PC-9 (cell line): ENCODE measurements at regions of chr9 and their contacts with region 1.

Region 1: GRCh38 chr9:81689343-81690190 is at the start of gene TLE1:
- DNase-seq: peak; percentile 98 to 100
- H3K4me3 ChIP-seq: peak within 1 kb of the TSS; percentile 84
- H3K27ac ChIP-seq: peak within 1 kb of the TSS; percentile 91
- H3K4me1 ChIP-seq: peaks cover 34% of the 10 kb centered on the region
- H3K27me3 ChIP-seq: no peaks in the 10 kb centered on the region
- CTCF ChIP-seq: no peak
- total RNA-seq, gene TLE1: 69.9 and 80.9 TPM in 2 replicates

Region 2: GRCh38 chr9:80664327-80665200 is 1025.0 kb before region 1 on chr9:
- CTCF ChIA-PET with region 1: no interaction called
- POLR2A ChIA-PET with region 1: no interaction called
- intact Hi-C with region 1: loop called (anchors 5 kb)
- DNase-seq: no peak
- H3K4me3 ChIP-seq: no peak overlapping the region
- H3K27ac ChIP-seq: no peak overlapping the region
- H3K4me1 ChIP-seq: no peaks in the 10 kb centered on the region
- H3K27me3 ChIP-seq: no peaks in the 10 kb centered on the region
- CTCF ChIP-seq: peak; percentile 45; the same call in 1 of the 2 replicates

Region 3: DNA sequence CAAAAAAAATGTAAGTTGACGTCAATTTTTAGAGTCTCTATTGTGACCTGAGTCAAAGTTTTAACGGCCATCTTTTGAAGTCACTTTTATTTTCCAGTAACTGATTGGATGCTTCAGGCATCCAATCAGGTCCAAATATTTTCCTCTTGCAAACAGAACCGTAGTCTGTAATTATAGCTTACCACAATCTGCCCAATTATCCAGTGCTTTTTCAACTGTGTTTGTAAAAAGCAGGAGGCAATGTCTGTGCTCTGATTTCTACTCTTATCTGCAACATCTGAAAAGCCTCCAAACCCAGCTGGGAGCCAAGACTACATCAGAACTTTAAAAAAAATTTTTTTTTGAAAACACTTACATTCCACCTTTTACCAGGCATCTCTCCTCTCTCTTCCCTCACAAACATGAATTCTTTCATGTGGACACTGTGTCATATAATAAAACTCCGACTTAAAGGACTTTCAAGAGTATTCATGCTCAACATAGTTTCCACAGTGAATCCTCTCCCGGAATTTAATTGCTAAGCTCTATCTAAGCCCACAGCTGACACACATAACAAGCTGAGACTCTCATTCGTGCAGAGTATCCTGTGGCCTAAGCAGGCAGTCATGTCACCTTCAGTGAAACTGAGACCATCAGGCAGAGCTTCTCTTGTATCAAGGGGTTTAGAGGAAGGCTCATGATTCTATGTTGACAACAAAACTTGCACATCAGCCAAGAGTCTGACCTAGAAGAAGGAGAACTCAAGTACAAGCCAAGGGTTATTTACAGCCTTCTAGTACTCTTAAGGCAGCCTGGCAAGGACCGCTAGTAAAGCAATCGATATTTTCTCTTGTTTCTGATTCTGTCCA is 272.9 kb before region 1 on chr9:
- CTCF ChIA-PET with region 1: no interaction called
- POLR2A ChIA-PET with region 1: no interaction called
- intact Hi-C with region 1: no loop called
- DNase-seq: no peak
- H3K4me3 ChIP-seq: no peak overlapping the region
- H3K27ac ChIP-seq: no peak overlapping the region
- H3K4me1 ChIP-seq: no peaks in the 10 kb centered on the region
- H3K27me3 ChIP-seq: no peaks in the 10 kb centered on the region
- CTCF ChIP-seq: no peak

Region 4: GRCh38 chr9:81431641-81432040 is 257.9 kb before region 1 on chr9:
- CTCF ChIA-PET with region 1: no interaction called
- POLR2A ChIA-PET with region 1: no interaction called
- intact Hi-C with region 1: no loop called
- DNase-seq: no peak
- H3K4me3 ChIP-seq: no peak overlapping the region
- H3K27ac ChIP-seq: no peak overlapping the region
- H3K4me1 ChIP-seq: no peaks in the 10 kb centered on the region
- H3K27me3 ChIP-seq: no peaks in the 10 kb centered on the region
- CTCF ChIP-seq: no peak

Region 5: GRCh38 chr9:81594415-81594814 is 95.2 kb before region 1 on chr9:
- CTCF ChIA-PET with region 1: no interaction called
- POLR2A ChIA-PET with region 1: interaction called, 17 read pairs
- intact Hi-C with region 1: no loop called
- DNase-seq: no peak
- H3K4me3 ChIP-seq: no peak overlapping the region
- H3K27ac ChIP-seq: no peak overlapping the region
- H3K4me1 ChIP-seq: no peaks in the 10 kb centered on the region
- H3K27me3 ChIP-seq: no peaks in the 10 kb centered on the region
- CTCF ChIP-seq: no peak

Region 6: DNA sequence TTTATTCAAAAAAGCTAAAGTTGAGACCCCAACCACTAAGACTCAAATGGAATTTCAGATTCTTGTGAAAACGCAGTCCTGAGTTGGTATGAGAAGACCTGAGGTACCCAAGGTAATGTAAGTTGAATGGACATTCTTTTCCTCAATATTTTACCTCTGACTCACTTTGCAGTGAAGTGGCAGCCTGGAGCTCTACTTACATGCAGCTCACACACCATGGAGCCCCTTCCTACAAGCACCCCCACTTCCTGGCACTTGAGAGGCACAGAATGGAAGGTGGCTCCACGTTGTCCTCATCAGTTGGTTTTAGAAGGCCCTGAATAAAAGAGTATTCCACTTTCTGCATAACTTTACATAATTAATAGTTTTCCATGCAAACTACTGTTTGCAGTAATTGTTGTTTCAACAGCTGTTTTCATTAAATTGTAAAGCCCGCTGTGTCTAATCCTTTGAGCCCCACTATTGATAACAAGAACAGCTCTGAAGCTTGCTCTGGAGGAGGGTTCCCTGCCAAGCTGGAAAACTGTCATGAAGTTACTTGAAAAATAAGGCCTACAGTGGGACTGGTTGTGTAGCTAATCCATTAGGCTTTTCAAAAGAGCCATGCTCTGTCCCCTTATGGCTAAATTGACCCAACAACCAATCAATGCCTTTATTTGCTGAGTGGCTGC is 136.4 kb after region 1 on chr9:
- CTCF ChIA-PET with region 1: no interaction called
- POLR2A ChIA-PET with region 1: interaction called, 4 read pairs
- intact Hi-C with region 1: loop called (anchors 1 kb)
- DNase-seq: peak; percentile 51 to 88
- H3K4me3 ChIP-seq: no peak overlapping the region
- H3K27ac ChIP-seq: peak overlapping the region; percentile 91
- H3K4me1 ChIP-seq: peaks cover 39% of the 10 kb centered on the region
- H3K27me3 ChIP-seq: no peaks in the 10 kb centered on the region
- CTCF ChIP-seq: no peak

Region 7: GRCh38 chr9:82606492-82607382 is 917.2 kb after region 1 on chr9:
- CTCF ChIA-PET with region 1: no interaction called
- POLR2A ChIA-PET with region 1: no interaction called
- intact Hi-C with region 1: loop called (anchors 10 kb)
- DNase-seq: peak in 1 of 2 experiments; percentile 37
- H3K4me3 ChIP-seq: no peak overlapping the region
- H3K27ac ChIP-seq: no peak overlapping the region
- H3K4me1 ChIP-seq: no peaks in the 10 kb centered on the region
- H3K27me3 ChIP-seq: no peaks in the 10 kb centered on the region
- CTCF ChIP-seq: peak; percentile 63